Activated naive CD4-positive, alpha-beta T cell treated with anti-CD3 and anti-CD28 coated beads for 36 hours (primary cell): ENCODE measurements at regions of chr2 and their contacts with region 1.

Region 1: DNA sequence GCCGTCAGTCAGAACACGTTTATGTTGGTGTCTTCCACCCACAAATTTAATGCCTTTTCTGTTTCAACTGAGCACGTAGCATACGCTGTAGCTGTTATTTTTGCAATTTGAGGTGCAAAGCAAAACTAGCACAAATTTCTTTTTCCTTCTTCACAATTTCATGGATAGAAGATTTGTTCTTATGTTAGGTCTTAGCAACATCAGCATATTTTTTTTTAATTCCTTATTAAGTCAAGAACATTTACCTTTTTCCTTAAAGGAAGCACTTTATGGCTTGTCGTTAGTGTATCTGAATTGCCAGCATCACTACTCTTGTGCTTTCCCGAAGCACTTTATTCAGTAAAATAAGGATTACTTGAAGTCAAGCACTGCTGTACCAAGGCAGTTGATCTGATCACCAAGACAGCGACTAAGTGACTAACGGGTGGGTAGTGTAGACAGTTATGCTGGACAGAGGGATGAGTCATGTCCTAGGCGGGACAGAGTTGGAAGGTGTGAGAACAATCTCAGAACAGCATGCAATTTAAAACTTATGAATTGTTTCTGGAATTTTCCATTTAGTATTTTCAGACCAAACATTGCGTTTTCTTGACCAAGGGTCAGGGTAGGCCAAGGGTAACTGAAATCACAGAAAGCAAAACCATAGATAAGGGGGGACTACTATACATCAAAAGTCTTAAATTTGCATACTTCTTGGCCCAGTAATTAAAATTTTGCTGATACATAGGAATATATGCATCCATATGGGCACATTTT is 13.3 kb downstream of the BABAM2 start:
- DNase-seq: no peak
- H3K4me3 Mint-ChIP-seq: no peak overlapping the region
- H3K27ac Mint-ChIP-seq: no peak overlapping the region
- H3K4me1 Mint-ChIP-seq: peaks cover 52% of the 10 kb centered on the region
- H3K27me3 Mint-ChIP-seq: no peaks in the 10 kb centered on the region

Region 2: DNA sequence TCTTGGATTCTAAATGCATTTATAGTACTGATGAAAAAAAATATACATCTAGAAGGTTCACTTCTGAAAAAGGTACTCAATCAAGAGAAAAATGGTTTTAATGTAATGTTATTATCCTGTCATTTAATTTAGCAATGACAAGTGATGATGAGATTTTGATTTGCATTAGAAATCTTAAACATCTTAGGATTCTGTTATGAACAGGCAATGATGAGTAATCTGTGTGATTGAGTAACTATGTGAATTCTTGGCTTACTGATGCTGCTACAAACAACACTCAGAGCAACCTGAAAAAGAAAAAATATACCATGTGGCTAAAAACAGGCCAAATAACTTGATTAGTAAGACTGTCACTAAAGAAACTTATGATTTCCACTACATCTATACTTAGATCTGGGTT is 43.7 kb before region 1 on chr2:
- CTCF ChIA-PET with region 1: no interaction called
- intact Hi-C with region 1: loop called (anchors 1 kb)
- DNase-seq: no peak
- H3K4me3 Mint-ChIP-seq: no peak overlapping the region
- H3K27ac Mint-ChIP-seq: no peak overlapping the region
- H3K4me1 Mint-ChIP-seq: peaks cover 19% of the 10 kb centered on the region
- H3K27me3 Mint-ChIP-seq: no peaks in the 10 kb centered on the region

Region 3: DNA sequence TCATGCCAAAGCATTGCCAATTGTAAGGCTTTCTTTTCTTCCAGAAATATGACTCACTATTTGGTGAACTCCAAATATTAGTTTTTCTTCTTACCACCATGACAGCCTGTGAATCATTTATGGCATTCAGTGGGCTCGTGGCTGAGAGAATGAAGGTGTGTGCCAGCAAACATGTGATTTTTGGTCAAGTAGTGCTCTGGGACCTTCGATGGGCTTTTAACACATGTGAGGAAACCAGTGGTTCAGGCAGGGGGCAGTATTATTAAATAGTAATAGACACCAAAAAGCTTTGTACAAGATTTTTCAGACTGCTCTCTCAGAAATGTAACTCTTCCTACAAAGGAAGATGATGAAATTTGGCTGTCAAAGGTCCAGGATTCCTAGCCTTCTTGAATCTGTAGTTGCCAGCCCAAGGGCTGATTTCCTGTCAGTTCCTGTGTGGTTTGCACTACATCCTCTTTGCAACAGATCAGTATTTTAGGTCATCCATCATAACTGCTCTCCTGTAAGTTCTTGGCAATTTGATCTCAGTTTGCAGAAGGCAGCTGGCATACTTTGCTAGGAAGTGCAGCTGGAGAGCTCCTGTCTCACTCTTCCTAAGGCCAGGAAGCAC is 51.0 kb after region 1 on chr2:
- CTCF ChIA-PET with region 1: no interaction called
- intact Hi-C with region 1: loop called (anchors 1 kb)
- DNase-seq: peak; percentile 68
- H3K4me3 Mint-ChIP-seq: no peak overlapping the region
- H3K27ac Mint-ChIP-seq: peak overlapping the region; percentile 68
- H3K4me1 Mint-ChIP-seq: peaks cover 65% of the 10 kb centered on the region
- H3K27me3 Mint-ChIP-seq: no peaks in the 10 kb centered on the region

Region 4: DNA sequence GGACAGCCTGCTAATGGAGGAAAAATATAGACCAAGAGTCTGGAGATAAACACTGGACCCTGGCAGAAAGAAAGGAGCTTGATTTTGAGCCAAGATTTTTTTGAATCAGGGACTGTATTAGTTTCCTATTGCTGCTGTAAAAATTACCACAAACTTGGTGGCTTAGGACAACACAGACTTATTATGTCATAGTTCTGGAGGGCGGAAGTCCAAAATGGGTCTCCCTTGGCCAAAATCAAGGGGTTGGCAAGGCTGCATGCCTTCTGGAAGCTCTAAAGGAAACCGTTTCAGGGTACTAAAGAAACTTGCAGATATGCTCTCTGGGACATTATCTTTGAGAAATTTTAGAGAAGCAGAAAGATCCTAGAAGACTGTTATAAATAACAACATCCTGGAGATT is 126.8 kb after region 1 on chr2:
- CTCF ChIA-PET with region 1: no interaction called
- intact Hi-C with region 1: loop called (anchors 1 kb)
- DNase-seq: no peak
- H3K4me3 Mint-ChIP-seq: no peak overlapping the region
- H3K27ac Mint-ChIP-seq: no peak overlapping the region
- H3K4me1 Mint-ChIP-seq: peaks cover 17% of the 10 kb centered on the region
- H3K27me3 Mint-ChIP-seq: no peaks in the 10 kb centered on the region

Region 5: GRCh38 chr2:28319117-28320008 is 415.5 kb after region 1 on chr2:
- CTCF ChIA-PET with region 1: no interaction called
- intact Hi-C with region 1: no loop called
- DNase-seq: no peak
- H3K4me3 Mint-ChIP-seq: no peak overlapping the region
- H3K27ac Mint-ChIP-seq: no peak overlapping the region
- H3K4me1 Mint-ChIP-seq: no peaks in the 10 kb centered on the region
- H3K27me3 Mint-ChIP-seq: no peaks in the 10 kb centered on the region

Region 6: DNA sequence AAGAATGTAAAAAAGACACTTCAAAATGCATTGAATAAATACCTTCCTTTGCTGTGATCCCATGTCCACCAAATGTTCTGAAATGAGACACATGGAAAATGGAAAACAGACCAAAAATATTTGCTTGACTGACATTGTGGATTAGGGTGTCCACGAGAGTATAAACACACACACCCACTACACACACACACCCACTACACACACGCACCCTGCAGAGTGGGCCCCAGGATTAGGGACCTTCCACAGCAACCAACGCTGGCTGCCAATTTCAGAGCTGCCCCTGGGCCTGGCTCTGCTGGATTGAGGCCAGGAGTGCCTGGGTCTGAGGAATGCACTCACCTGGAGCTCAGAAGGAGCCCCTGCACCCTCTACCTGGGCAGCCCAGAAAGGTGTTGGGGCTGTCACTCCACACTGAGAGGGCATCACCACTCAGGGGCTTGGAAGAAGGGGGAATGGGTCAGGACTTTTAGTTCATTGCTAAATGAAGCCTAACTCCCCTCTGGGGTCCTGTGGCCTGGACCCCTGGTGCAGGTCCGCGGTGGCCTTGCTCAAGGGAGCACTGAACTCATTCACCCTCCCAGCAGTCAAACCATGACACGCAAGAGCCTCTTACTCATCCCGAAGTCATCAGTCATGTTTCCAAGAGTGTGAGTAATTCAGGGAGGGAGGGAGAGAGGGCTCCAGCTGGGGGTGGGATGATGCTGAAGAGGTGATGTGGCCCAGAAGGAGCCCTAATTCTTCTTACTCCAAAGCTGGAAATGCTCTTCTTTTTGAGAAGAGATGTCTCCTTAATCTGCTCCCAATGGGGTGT is 541.8 kb after region 1 on chr2:
- CTCF ChIA-PET with region 1: no interaction called
- intact Hi-C with region 1: loop called (anchors 5 kb)
- DNase-seq: peak; percentile 87
- H3K4me3 Mint-ChIP-seq: peak overlapping the region; percentile 37
- H3K27ac Mint-ChIP-seq: peak overlapping the region; percentile 80
- H3K4me1 Mint-ChIP-seq: peaks cover 68% of the 10 kb centered on the region
- H3K27me3 Mint-ChIP-seq: no peaks in the 10 kb centered on the region